Right ventricle myocardium superior (tissue), 1 donor: ENCODE measurements at regions of chr14 and their contacts with region 1.

Region 1: GRCh38 chr14:78278464-78279250 is 108.5 kb downstream of the NRXN3 start:
- DNase-seq: no peak
- ATAC-seq: no peak

Region 2: GRCh38 chr14:78029601-78030372 is 248.9 kb before region 1 on chr14:
- intact Hi-C with region 1: loop called (anchors 10 kb)
- DNase-seq: no peak
- ATAC-seq: no peak